ENCODE measurements at regions of chr2 and their contacts with region 1.

Region 1: DNA sequence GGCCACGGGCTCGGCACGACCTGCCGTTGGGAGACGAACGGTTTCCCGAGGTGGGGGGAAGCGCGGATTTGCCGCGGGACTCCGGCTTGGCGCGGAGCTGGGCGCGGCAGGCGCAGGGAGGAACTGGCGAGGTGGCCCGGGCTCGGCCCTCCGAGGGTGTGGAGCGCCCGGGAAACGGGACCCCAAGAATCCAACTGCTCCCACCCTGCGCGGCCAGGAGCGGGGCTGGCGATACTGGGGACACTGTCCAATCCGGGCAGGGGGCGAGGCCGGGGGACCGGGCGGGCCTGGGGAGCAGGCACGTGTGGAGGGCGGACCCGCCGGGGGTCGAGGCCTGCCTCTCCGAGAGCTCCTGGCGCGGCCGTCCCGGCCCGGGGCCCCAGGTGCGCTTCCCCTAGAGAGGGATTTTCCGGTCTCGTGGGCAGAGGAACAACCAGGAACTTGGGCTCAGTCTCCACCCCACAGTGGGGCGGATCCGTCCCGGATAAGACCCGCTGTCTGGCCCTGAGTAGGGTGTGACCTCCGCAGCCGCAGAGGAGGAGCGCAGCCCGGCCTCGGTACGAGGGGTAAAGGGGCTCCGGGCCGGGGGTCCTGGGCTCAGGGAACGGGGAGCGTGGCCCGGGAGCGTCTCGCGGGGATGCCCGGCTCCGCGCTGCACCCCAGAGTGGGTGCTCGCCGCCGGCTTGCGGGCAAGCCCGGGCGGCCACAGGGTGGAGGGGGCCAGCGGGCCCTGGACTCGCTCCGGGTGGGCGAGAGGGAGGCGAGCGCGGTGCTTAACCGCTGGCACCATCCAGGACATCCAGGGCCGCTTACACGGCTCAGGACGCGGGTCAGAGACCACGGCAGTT is at the start of gene ANXA4:
- DNase-seq: peak; percentile 86
- CTCF ChIP-seq: no peak

Region 2: DNA sequence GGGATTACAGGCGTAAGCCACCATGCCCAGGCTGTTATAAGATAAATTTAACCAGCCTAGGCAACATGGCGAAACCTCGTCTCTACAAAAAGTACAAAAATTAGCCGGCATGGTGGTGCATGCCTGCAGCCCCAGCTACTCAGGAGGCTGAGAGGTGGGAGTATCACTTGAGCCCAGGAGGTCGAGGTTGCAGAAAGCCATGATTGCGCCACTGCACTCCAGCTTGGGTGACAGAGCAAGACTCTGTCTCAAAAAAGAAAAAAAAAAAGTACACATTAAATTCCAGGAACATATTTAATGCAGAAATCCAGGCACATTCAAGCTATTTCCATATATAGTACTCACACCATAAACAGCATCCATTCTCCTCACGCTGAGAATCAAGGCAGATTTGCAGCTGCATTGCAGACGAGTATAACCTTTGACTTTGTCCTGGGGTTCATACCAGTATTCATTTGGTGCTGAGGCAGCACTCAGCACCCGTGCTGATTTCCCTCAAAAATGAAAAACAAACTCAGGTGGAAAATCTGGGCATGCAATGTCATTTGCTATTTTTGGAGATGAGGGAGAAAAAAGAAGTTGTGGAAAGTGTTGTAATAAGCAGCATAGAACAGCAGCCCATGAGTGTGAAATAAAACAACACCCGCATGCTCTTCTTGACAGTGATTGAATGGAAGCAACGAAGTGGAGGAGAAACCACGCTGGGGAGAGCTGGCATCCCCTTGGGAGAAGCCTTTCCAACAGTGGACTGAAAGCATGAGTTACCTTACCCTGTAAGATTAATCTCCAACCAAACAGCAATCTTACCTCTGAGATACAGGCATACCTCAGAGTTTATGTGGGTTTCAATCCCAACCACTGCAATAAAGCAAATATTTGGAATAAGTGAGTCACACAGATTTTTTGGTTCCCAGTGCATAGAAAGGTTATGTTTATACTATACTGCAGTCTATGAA is 46.7 kb before region 1 on chr2:
- CTCF ChIA-PET with region 1: no interaction called
- POLR2A ChIA-PET with region 1: no interaction called
- DNase-seq: no peak
- CTCF ChIP-seq: no peak

Region 3: GRCh38 chr2:69762513-69763497 is 21.0 kb after region 1 on chr2:
- CTCF ChIA-PET with region 1: interaction called, 10 read pairs
- POLR2A ChIA-PET with region 1: interaction called, 4 read pairs
- DNase-seq: no peak
- CTCF ChIP-seq: no peak

Region 4: DNA sequence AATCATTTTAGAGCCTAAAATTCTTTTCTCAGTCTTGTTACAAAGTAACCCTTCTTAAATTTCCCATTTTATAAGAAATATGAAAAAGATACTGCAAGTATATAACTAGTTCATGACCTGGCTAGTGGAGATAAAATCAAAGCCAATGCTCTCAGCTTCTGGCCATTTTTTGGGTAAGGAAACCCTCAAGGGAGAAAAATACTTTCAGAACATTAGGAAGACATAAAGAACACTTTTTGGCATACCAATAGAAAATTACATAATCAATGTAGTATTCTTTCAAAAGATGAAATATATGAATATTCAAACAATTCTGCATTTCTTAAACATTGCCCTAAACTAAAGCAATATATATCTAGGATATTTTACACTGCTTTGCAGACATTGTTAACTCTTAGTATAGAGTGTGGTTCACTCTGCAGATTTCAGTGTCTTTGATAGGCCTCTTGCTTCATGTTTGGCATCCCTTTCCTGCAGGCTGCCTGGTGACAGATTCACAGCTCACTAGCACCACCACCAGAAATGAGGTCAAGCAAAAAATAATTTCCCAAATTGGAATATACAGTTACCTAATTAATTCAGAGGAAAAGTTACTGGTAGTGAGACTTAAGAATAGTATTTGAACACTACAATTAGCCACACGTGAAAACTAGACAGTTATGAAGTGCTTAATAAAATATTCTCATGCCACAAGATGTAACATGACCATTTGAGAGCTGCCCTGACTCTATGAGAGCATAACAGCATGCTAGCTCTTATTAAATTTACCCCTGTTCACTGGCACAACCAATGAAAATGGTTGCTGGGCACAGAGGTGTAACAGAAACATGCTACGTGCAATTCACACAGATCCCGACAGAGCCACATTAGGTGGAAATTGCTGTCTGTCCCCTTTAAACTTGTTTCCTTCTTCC is 1449.1 kb after region 1 on chr2:
- CTCF ChIA-PET with region 1: no interaction called
- POLR2A ChIA-PET with region 1: no interaction called
- DNase-seq: no peak
- CTCF ChIP-seq: no peak